OCI-LY7 (cell line): ENCODE measurements at regions of chr5 and their contacts with region 1.

Region 1: DNA sequence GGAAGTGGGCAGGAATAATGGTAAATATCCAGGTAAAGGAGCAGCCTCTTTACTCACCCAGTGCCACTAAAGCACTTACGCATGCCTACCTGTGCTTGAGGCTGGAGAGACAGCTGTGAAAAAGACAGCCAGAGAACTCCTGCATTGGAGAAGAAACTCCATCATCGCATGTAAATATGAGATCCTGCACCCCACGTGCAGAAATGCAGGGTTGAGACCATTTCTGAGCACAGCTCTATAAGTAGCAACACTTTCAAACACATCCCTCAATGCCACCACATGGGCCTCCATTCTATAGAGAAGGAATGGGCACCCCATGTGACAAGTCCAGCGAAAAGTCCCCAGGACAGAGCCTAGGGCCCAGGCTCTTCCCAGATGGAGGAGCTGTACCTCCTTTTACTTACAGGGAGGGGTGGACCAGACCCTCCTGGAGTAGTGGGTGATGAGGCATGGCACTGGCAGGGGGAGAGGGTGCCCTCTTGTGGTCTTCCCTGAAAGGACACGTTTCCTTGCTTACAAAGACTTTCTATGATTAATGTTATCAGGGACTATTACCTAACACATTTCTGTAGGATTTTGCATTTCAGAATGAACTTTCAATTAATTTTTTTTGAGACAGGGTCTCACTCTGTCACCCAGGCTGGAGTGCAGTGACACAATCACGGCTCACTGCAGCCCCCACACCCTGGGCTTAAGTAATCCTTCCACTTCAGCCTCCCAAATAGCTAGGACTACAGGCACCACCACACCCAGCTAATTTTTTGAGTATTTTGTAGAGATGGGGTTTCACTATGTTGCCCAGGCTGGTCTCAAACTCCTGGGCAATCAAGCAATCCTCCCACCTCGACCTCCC is 55.3 kb upstream of the IL17B start:
- DNase-seq: peak; percentile 63
- H3K4me3 ChIP-seq: no peak overlapping the region
- H3K27ac ChIP-seq: no peak overlapping the region
- H3K4me1 ChIP-seq: peaks cover 26% of the 10 kb centered on the region
- CTCF ChIP-seq: peak; percentile 91

Region 2: DNA sequence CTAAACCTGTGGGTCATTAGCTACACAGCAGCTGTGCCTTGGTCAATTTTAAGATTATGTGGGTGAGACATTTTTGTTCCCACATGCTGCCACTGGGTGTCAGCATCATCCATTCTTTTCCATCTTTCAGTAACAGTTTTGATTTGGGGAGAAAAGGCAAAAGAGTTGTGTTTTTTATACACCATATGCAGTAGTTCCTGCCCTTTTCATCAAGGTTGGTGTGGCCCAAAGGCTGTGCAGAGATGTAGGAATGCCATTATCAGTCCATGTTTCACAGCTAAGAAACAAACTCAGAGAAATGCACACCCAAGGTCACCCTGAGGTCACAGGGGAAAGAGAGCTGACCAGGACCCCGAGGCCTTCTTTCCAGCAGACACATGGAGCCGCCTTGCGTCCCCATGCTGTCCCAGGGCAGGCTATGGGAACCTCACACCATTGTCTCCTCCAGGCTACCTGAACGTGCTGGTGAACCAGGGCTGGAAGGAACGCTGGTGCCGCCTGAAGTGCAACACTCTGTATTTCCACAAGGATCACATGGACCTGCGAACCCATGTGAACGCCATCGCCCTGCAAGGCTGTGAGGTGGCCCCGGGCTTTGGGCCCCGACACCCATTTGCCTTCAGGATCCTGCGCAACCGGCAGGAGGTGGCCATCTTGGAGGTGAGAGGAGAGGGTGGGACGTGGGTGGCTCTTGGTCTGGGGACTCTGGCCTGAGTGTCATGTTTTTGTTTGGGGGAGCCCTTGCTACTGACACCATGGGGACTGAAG is 116.9 kb before region 1 on chr5:
- CTCF ChIA-PET with region 1: no interaction called
- POLR2A ChIA-PET with region 1: no interaction called
- intact Hi-C with region 1: loop called (anchors 2 kb)
- DNase-seq: peak; percentile 54
- H3K4me3 ChIP-seq: no peak overlapping the region
- H3K27ac ChIP-seq: no peak overlapping the region
- H3K4me1 ChIP-seq: no peaks in the 10 kb centered on the region
- CTCF ChIP-seq: peak; percentile 90

Region 3: GRCh38 chr5:149367249-149367971 is 67.0 kb before region 1 on chr5:
- CTCF ChIA-PET with region 1: no interaction called
- POLR2A ChIA-PET with region 1: no interaction called
- intact Hi-C with region 1: no loop called
- DNase-seq: peak; percentile 69
- H3K4me3 ChIP-seq: no peak overlapping the region
- H3K27ac ChIP-seq: no peak overlapping the region
- H3K4me1 ChIP-seq: peaks cover 5% of the 10 kb centered on the region
- CTCF ChIP-seq: peak; percentile 92

Region 4: GRCh38 chr5:149381987-149382340 is 52.4 kb before region 1 on chr5:
- CTCF ChIA-PET with region 1: interaction called, 3 read pairs
- POLR2A ChIA-PET with region 1: no interaction called
- intact Hi-C with region 1: loop called (anchors 2 kb)
- DNase-seq: peak; percentile 63
- H3K4me3 ChIP-seq: no peak overlapping the region
- H3K27ac ChIP-seq: no peak overlapping the region
- H3K4me1 ChIP-seq: no peaks in the 10 kb centered on the region
- CTCF ChIP-seq: peak; percentile 90

Region 5: DNA sequence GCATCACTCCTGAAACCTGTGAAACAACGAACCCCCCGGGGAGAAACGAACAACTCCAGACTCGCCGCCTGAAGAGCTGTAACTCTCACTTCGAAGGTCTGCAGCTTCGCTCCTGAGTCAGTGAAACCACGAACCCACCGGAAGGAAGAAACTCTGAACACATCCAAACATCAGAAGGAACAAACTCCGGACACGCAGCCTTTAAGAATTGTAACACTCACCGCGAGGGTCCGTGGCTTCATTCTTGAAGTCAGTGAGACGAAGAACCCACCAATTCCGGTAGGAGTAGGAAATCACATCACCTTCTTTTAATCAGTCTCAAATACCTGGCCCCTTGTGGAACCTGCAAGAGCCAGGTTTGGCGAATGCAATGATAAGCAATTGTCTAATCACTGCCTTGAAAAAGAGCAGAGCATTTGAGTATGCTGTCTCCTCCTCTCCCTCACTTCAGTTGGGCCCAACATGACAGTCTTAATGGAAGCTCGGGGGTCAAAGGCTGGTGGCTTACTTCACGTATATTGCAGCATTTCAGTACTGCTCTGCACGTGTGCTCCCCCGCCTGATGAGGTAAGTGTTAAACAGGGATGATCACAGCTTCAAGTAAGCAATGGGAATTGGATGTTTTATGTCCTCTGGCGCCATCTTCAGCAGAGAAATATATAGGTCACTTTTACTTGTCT is 1412.4 kb after region 1 on chr5:
- CTCF ChIA-PET with region 1: no interaction called
- POLR2A ChIA-PET with region 1: no interaction called
- intact Hi-C with region 1: no loop called
- DNase-seq: peak; percentile 77
- H3K4me3 ChIP-seq: no peak overlapping the region
- H3K27ac ChIP-seq: no peak overlapping the region
- H3K4me1 ChIP-seq: peaks cover 5% of the 10 kb centered on the region
- CTCF ChIP-seq: peak; percentile 81